ENCODE measurements at regions of chr12 and their contacts with region 1.

Region 1: GRCh38 chr12:6074979-6075585 is 49.4 kb downstream of the VWF start:
- DNase-seq: peak in 4 of 5 donors; percentile 51 to 74 (median 58)
- ATAC-seq: peak; percentile 15 to 65 (median 60)
- H3K4me3 ChIP-seq: peak overlapping the region in 9 of 12 donors; percentile 10 to 44 (median 34)
- H3K27ac ChIP-seq: peak overlapping the region; percentile 53 to 87 (median 71)
- H3K4me1 ChIP-seq: peaks cover 11 to 79% (median 44%) of the 10 kb centered on the region in 12 donors
- H3K27me3 ChIP-seq: peaks cover 0 to 11% (median 0%) of the 10 kb centered on the region in 9 donors
- CTCF ChIP-seq: no peak
- POLR2A ChIP-seq: no peak

Region 2: GRCh38 chr12:6110006-6110665 is 35.1 kb after region 1 on chr12:
- intact Hi-C with region 1: loop called in 3 of 10 experiments (anchors 5 kb)
- DNase-seq: no peak
- ATAC-seq: no peak
- H3K4me3 ChIP-seq: no peak overlapping the region
- H3K27ac ChIP-seq: peak overlapping the region in 1 of 12 donors; percentile 11
- H3K4me1 ChIP-seq: peaks cover 0 to 33% (median 10%) of the 10 kb centered on the region in 12 donors
- H3K27me3 ChIP-seq: no peaks in the 10 kb centered on the region
- CTCF ChIP-seq: no peak
- POLR2A ChIP-seq: no peak

Region 3: GRCh38 chr12:6116175-6117021 is 41.3 kb after region 1 on chr12:
- intact Hi-C with region 1: loop called in 7 of 10 experiments (anchors 5 kb)
- DNase-seq: peak in 4 of 5 donors; percentile 53 to 69 (median 60)
- ATAC-seq: peak; percentile 42 to 81 (median 60)
- H3K4me3 ChIP-seq: peak overlapping the region in 5 of 12 donors; percentile 2 to 20 (median 6)
- H3K27ac ChIP-seq: peak overlapping the region; percentile 68 to 92 (median 83)
- H3K4me1 ChIP-seq: peaks cover 0 to 63% (median 22%) of the 10 kb centered on the region in 12 donors
- H3K27me3 ChIP-seq: no peaks in the 10 kb centered on the region
- CTCF ChIP-seq: no peak
- POLR2A ChIP-seq: no peak

Region 4: GRCh38 chr12:6182116-6182898 is 107.2 kb after region 1 on chr12:
- intact Hi-C with region 1: loop called in 4 of 10 experiments (anchors 5 to 10 kb)
- DNase-seq: peak in 4 of 5 donors; percentile 68 to 75 (median 72)
- ATAC-seq: peak; percentile 41 to 81 (median 72)
- H3K4me3 ChIP-seq: no peak overlapping the region
- H3K27ac ChIP-seq: peak overlapping the region; percentile 52 to 88 (median 70)
- H3K4me1 ChIP-seq: peaks cover 5 to 53% (median 46%) of the 10 kb centered on the region in 12 donors
- H3K27me3 ChIP-seq: no peaks in the 10 kb centered on the region
- CTCF ChIP-seq: no peak
- POLR2A ChIP-seq: peak in 1 of 2 donors; percentile 30

Measured in heart left ventricle (tissue), 16 donors.